ENCODE measurements at regions of chr17 and their contacts with region 1.

Region 1: DNA sequence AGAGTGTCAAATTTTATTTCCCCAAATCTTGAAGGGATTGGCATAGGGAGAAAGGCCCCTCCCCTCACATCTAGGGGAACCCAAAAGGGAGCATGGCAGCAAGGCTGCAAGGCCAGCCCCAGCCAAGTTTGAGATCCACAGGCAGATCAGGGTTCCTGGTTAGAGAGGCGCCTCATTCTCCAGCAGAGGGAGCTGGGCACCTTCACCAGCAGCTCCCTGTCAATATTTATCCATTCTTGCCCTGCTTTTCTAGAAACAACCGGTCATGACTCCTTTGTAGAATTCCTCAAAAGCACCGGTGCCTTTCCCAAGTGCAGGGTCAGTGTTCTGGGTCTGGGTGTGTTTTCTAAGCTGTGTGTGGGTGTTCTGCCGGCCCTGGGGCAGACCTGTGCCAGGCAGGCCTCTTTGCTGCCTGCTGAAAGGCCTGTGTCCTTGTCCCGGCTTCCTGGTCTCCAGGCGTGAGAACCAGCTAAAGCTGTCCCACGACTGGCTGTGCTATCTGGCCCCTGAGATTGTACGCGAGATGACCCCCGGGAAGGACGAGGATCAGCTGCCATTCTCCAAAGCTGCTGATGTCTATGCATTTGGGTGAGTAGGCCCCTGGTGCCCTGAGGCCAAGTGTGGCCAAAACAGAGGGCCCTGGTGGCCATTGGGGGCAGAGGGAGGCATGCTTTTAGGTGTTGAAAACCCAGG is 21.2 kb upstream of the LGALS9 start:
- DNase-seq: peak; percentile 74 to 88
- H3K4me3 ChIP-seq: no peak overlapping the region
- H3K27ac ChIP-seq: peak overlapping the region; percentile 33 to 76 (median 52)
- H3K4me1 ChIP-seq: peaks cover 0 to 9% (median 8%) of the 10 kb centered on the region in 4 donors
- H3K27me3 ChIP-seq: no peaks in the 10 kb centered on the region
- CTCF ChIP-seq: peak in 5 of 7 experiments; percentile 42 to 85 (median 71)
- EP300 ChIP-seq: no peak
- POLR2A ChIP-seq: no peak

Region 2: GRCh38 chr17:27559506-27560481 is 50.0 kb before region 1 on chr17:
- intact Hi-C with region 1: no loop called
- DNase-seq: peak; percentile 53 to 93
- H3K4me3 ChIP-seq: peak overlapping the region in 3 of 4 donors; percentile 3 to 11 (median 8)
- H3K27ac ChIP-seq: peak overlapping the region in 4 of 5 donors; percentile 64 to 72 (median 68)
- H3K4me1 ChIP-seq: peaks cover 11 to 32% (median 24%) of the 10 kb centered on the region in 4 donors
- H3K27me3 ChIP-seq: no peaks in the 10 kb centered on the region
- CTCF ChIP-seq: no peak
- EP300 ChIP-seq: no peak
- POLR2A ChIP-seq: no peak

Region 3: DNA sequence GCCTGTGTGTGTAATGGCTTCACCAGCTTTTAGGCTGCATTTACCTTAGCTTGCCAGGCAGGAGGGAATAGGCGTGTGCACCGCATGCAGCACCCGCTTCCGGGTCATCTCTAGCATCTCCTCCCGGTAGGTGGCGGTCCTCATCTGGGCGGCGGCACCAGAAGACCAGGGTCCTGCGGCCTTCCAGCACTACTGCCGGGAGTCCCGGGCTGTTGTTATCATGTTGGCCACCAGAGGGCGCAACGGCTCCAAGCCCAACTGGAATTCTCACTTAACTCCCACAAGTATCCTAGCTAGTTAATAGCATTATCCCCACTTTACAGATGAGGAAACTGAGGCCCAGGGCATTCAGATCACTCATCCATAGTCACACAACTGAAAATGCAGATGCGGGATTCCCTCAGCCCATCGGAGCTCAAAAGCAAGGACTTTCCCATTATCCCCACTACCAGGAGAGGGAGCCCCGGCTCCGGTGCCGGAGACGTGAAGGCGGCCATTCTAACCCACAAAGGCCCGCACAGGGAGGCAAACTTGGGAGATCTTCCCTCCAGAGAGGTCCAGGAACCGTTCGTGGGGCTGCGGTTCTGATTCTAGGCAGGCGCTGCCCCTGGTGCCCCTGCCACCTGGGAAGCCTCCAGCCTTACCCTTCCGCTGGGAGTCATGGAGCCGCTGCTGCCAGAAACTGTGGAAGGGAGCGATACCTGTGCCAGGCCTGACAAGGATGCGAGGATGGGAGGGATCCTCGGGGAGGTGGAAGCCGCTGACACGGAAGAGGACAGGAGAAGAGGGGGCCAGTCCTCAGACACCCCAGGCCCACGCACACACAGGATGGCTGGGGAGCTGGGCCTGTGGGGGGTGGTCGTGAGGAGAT is 45.1 kb after region 1 on chr17:
- intact Hi-C with region 1: loop called (anchors 5 kb)
- DNase-seq: peak; percentile 75 to 86
- H3K4me3 ChIP-seq: no peak overlapping the region
- H3K27ac ChIP-seq: no peak overlapping the region
- H3K4me1 ChIP-seq: peaks cover 0 to 8% (median 2%) of the 10 kb centered on the region in 4 donors
- H3K27me3 ChIP-seq: peaks cover 0 to 6% (median 0%) of the 10 kb centered on the region in 3 donors
- CTCF ChIP-seq: peak in 6 of 7 experiments; percentile 15 to 94 (median 85)
- EP300 ChIP-seq: no peak
- POLR2A ChIP-seq: no peak

Region 4: GRCh38 chr17:28247671-28248555 is 638.2 kb after region 1 on chr17:
- intact Hi-C with region 1: no loop called
- DNase-seq: no peak
- H3K4me3 ChIP-seq: no peak overlapping the region
- H3K27ac ChIP-seq: no peak overlapping the region
- H3K4me1 ChIP-seq: peaks cover 8 to 13% (median 11%) of the 10 kb centered on the region in 4 donors
- H3K27me3 ChIP-seq: peaks cover 0 to 26% (median 3%) of the 10 kb centered on the region in 3 donors
- CTCF ChIP-seq: no peak
- EP300 ChIP-seq: no peak
- POLR2A ChIP-seq: no peak

Measured in stomach (tissue), 19 donors.